ENCODE measurements at regions of chr15 and their contacts with region 1.

Region 1: GRCh38 chr15:101664303-101664913 is 12.2 kb upstream of the TM2D3 start:
- DNase-seq: peak; percentile 20
- H3K4me3 Mint-ChIP-seq: no peak overlapping the region
- H3K27ac Mint-ChIP-seq: no peak overlapping the region
- H3K4me1 Mint-ChIP-seq: no peaks in the 10 kb centered on the region
- H3K27me3 Mint-ChIP-seq: no peaks in the 10 kb centered on the region
- CTCF ChIP-seq: peak; percentile 28

Region 2: GRCh38 chr15:101773496-101774105 is 109.2 kb after region 1 on chr15:
- CTCF ChIA-PET with region 1: no interaction called
- POLR2A ChIA-PET with region 1: no interaction called
- intact Hi-C with region 1: loop called (anchors 5 kb)
- DNase-seq: peak; percentile 38
- H3K4me3 Mint-ChIP-seq: no peak overlapping the region
- H3K27ac Mint-ChIP-seq: no peak overlapping the region
- H3K4me1 Mint-ChIP-seq: no peaks in the 10 kb centered on the region
- H3K27me3 Mint-ChIP-seq: peaks cover 82% of the 10 kb centered on the region
- CTCF ChIP-seq: peak; percentile 10

Measured in MCF 10A (cell line).